Spleen (tissue), 13 donors: ENCODE measurements at regions of chr12 and their contacts with region 1.

Region 1: GRCh38 chr12:48183091-48183875 is at the start of gene CCDC184:
- DNase-seq: peak; percentile 91
- H3K4me3 ChIP-seq: peak within 1 kb of the TSS; percentile 62 to 97 (median 86)
- H3K27ac ChIP-seq: peak within 1 kb of the TSS in 4 of 8 donors; percentile 17 to 70 (median 54)
- H3K4me1 ChIP-seq: peaks cover 0 to 40% (median 28%) of the 10 kb centered on the region in 6 donors
- H3K27me3 ChIP-seq: peaks cover 0 to 60% (median 20%) of the 10 kb centered on the region in 7 donors
- CTCF ChIP-seq: peak in 7 of 11 experiments; percentile 12 to 49 (median 41)
- POLR2A ChIP-seq: no peak
- total RNA-seq, gene CCDC184: 0.73 to 1.7 (median 1.1) TPM

Region 2: DNA sequence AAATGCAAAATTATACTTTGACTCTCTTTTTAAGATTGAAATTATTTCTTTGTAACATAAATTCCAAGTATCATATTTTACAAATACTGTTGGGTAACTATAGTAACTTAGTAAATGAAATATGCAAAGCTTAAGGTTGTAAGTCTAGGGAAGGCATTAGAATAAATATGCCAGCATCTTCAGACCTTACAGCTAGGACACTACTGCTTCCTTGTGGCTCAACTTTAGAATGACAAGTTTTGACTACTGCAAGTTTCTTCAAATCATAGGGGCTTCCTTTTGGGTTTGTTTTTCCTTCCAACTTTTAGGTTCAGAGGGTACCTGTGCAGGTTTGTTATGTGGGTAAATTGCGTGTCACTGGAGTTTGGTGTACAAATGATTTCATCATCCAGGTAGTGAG is 271.4 kb after region 1 on chr12:
- intact Hi-C with region 1: loop called (anchors 10 kb)
- DNase-seq: no peak
- H3K4me3 ChIP-seq: no peak overlapping the region
- H3K27ac ChIP-seq: no peak overlapping the region
- H3K4me1 ChIP-seq: no peaks in the 10 kb centered on the region
- H3K27me3 ChIP-seq: peaks cover 0 to 5% (median 0%) of the 10 kb centered on the region in 7 donors
- CTCF ChIP-seq: peak in 8 of 11 experiments; percentile 32 to 58 (median 48)
- POLR2A ChIP-seq: no peak